ENCODE measurements at regions of chr16 and their contacts with region 1.

Region 1: DNA sequence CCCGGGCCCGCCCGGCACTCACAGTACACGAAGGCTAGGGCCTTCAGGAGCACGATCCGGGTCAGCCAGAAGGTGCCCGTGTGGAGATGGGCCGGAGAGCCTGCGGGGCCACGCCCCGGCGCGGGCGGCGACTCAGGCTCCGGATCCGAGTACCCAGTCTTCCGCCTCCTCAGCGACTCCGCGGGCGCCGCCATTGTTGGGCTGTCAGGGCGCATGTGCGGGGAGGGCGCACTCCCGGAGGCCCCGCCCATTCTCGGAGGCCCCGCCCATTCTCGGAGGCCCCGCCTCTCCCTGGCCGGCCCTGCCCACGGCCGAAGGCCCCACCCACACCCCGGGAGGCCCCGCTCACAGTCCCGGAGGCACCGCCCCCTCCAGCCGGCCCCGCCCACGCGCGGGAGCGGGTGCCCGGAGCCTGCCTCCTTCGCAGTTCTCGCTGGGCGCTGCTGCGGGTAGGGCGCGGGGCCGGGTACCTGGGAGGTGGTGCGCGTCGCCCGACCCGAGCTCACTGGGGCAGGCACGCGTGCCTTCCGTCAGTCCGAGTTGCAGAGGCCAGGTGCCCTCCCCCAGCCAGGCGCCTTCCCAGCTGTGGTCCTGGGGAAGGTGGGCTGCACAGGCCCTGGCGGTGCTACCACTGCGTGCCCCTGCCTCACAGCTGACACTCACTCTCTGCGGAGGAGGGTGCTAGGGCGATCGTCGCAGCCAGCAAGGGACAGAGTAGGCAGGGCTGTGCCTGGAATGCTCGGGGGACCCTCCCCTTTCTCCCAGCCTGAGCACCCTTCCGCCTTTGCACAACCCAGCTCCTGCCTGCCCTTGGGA is at the start of gene LMF1:
- DNase-seq: peak; percentile 97
- H3K4me3 Mint-ChIP-seq: peak within 1 kb of the TSS; percentile 78
- H3K27ac Mint-ChIP-seq: peak within 1 kb of the TSS; percentile 33
- H3K4me1 Mint-ChIP-seq: peaks cover 15% of the 10 kb centered on the region
- H3K27me3 Mint-ChIP-seq: no peaks in the 10 kb centered on the region
- total RNA-seq, gene LMF1: 14.4 to 15.4 TPM

Region 2: GRCh38 chr16:807347-808084 is 163.5 kb before region 1 on chr16:
- CTCF ChIA-PET with region 1: no interaction called
- POLR2A ChIA-PET with region 1: no interaction called
- intact Hi-C with region 1: loop called (anchors 5 kb)
- DNase-seq: peak; percentile 93
- H3K4me3 Mint-ChIP-seq: peak overlapping the region; percentile 95
- H3K27ac Mint-ChIP-seq: peak overlapping the region; percentile 87
- H3K4me1 Mint-ChIP-seq: peaks cover 11% of the 10 kb centered on the region
- H3K27me3 Mint-ChIP-seq: peaks cover 7% of the 10 kb centered on the region

Region 3: DNA sequence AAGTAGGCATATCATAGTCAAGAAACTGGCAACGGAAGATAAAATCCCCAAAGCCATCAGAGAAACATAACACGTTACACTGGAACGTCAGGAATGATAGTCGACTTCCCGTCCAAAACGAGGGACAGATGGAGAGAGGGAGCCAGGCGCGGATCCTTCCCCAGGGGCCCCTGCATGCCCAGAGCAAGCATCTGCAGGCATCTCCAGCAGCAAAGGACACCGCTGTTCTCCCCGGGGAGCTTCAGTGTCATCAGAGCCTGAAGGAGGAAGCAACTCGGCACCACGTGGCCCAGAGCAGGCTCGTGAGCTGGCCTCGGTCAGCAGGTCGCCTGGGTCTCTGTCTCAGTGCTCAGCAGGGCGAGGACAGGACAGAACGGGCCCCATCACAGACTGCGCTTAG is 50.3 kb before region 1 on chr16:
- CTCF ChIA-PET with region 1: no interaction called
- POLR2A ChIA-PET with region 1: no interaction called
- intact Hi-C with region 1: no loop called
- DNase-seq: no peak
- H3K4me3 Mint-ChIP-seq: no peak overlapping the region
- H3K27ac Mint-ChIP-seq: no peak overlapping the region
- H3K4me1 Mint-ChIP-seq: no peaks in the 10 kb centered on the region
- H3K27me3 Mint-ChIP-seq: no peaks in the 10 kb centered on the region

Region 4: DNA sequence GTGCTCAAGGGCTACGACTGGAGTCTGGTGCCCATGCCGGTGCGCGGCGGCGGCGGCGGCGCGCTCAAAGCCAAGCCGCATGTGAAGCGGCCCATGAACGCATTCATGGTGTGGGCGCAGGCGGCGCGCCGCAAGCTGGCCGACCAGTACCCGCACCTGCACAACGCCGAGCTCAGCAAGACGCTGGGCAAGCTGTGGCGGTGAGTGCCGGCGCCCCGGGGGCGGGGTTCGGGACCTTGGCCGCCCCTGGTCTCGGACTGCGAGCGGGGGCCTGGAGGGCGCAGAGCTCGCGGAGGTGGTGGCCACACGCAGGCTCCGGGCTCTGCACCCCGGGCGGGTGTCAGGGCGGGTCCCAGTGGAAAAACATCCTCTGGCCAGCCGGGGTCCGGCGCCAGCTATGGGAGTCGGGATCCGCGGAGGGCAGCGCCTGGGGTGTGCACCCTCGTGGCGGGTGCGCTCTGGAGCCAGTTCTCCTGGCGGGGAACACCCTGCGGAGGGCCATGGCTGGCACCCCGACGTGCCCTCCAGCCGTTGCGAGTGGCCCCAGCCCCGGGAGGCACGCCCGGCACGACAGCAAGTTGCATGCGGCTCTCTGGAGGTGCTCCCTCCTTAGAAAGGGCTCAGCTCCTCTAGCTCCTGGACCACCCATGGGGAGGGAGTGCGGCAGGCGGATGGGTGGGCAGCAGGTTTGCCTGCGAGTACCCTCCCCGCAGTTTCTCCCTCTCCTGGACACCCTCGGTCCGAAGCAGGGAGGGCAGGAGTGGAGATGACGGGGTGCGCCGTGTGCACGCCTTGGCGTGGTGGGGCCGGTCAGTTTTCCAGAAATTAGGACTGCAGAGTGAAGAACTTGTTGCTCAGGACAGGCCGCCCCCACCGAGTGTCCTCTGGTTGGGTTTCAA is 11.4 kb after region 1 on chr16:
- CTCF ChIA-PET with region 1: interaction called, 3 read pairs
- POLR2A ChIA-PET with region 1: interaction called, 4 read pairs
- intact Hi-C with region 1: loop called (anchors 1 kb)
- DNase-seq: peak; percentile 34
- H3K4me3 Mint-ChIP-seq: peak overlapping the region; percentile 29
- H3K27ac Mint-ChIP-seq: no peak overlapping the region
- H3K4me1 Mint-ChIP-seq: peaks cover 7% of the 10 kb centered on the region
- H3K27me3 Mint-ChIP-seq: peaks cover 4% of the 10 kb centered on the region

Region 5: GRCh38 chr16:997440-998051 is 26.6 kb after region 1 on chr16:
- CTCF ChIA-PET with region 1: no interaction called
- POLR2A ChIA-PET with region 1: interaction called, 3 read pairs
- intact Hi-C with region 1: loop called (anchors 2 kb)
- DNase-seq: peak; percentile 78
- H3K4me3 Mint-ChIP-seq: peak overlapping the region; percentile 67
- H3K27ac Mint-ChIP-seq: peak overlapping the region; percentile 49
- H3K4me1 Mint-ChIP-seq: peaks cover 52% of the 10 kb centered on the region
- H3K27me3 Mint-ChIP-seq: no peaks in the 10 kb centered on the region

Region 6: GRCh38 chr16:1002399-1003161 is 31.6 kb after region 1 on chr16:
- CTCF ChIA-PET with region 1: no interaction called
- POLR2A ChIA-PET with region 1: interaction called, 3 read pairs
- intact Hi-C with region 1: loop called (anchors 2 kb)
- DNase-seq: peak; percentile 94
- H3K4me3 Mint-ChIP-seq: peak overlapping the region; percentile 34
- H3K27ac Mint-ChIP-seq: peak overlapping the region; percentile 77
- H3K4me1 Mint-ChIP-seq: peaks cover 58% of the 10 kb centered on the region
- H3K27me3 Mint-ChIP-seq: no peaks in the 10 kb centered on the region

Measured in activated CD4-positive, alpha-beta memory T cell treated with anti-CD3 and anti-CD28 coated beads for 36 hours (primary cell).